ENCODE measurements at regions of chr1 and their contacts with region 1.

Region 1: DNA sequence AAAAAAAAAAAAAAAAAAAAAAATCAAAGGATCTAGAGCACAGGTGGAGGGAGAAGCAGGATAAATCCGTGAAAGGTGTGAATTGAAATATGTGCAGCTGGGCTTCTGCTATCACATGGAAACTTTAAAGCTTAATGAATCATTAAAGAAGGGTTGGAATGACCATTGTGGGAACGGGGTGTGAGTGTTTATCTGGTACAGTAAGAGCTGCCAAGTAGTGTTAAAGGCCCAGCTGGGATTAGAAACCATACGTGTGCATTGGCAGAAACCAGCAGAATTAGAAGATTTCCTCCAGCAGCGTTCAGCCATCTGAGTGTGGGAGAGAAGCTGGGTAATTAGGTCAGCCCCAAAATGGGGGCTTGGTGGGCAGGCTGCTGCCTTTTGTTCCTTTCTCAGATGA is 13.5 kb downstream of the FALEC start:
- DNase-seq: no peak
- CTCF ChIP-seq: no peak

Region 2: GRCh38 chr1:150464422-150464826 is 64.6 kb before region 1 on chr1:
- CTCF ChIA-PET with region 1: interaction called, 10 read pairs
- POLR2A ChIA-PET with region 1: no interaction called
- DNase-seq: peak; percentile 83
- CTCF ChIP-seq: peak; percentile 81

Region 3: DNA sequence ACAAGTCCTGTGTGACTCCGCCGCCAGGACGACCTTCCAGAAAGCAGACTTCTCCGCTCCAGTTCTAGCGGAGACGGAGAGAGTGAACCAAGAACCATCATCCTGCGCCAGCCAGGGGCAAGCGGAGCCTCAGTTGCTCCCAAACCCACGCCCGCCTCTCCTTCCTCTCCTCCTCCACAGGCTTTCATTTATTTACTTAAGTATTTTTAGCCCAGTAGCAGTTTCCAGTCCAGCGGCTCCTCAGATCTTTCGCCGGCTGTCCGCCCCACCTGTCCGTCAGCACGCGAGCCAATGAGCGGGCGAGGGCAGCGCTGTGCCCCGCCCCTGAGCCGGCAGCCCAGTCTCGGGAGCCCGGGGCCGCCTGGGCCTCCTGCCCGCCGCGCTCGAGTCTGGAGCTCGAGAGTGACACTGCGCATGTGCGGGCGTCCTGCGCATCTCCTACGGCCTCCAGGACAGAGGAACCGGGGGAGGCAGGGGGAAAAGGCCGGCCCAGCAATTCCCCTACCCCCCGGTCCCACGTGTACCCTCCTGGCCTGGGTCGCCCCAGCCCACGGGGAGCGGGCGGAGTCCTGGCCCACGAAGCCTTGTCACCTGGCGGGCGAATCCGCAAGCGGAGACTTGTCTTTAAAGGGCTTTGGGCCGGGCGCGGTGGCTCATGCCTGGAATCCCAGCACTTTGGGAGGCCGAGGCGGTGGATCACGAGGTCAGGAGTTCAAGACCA is 13.5 kb before region 1 on chr1 and contains the start of gene FALEC:
- CTCF ChIA-PET with region 1: interaction called, 46 read pairs
- POLR2A ChIA-PET with region 1: no interaction called
- DNase-seq: peak; percentile 99
- CTCF ChIP-seq: no peak

Region 4: GRCh38 chr1:150543500-150544141 is 14.6 kb after region 1 on chr1:
- CTCF ChIA-PET with region 1: interaction called, 47 read pairs
- POLR2A ChIA-PET with region 1: no interaction called
- DNase-seq: no peak
- CTCF ChIP-seq: no peak

Region 5: DNA sequence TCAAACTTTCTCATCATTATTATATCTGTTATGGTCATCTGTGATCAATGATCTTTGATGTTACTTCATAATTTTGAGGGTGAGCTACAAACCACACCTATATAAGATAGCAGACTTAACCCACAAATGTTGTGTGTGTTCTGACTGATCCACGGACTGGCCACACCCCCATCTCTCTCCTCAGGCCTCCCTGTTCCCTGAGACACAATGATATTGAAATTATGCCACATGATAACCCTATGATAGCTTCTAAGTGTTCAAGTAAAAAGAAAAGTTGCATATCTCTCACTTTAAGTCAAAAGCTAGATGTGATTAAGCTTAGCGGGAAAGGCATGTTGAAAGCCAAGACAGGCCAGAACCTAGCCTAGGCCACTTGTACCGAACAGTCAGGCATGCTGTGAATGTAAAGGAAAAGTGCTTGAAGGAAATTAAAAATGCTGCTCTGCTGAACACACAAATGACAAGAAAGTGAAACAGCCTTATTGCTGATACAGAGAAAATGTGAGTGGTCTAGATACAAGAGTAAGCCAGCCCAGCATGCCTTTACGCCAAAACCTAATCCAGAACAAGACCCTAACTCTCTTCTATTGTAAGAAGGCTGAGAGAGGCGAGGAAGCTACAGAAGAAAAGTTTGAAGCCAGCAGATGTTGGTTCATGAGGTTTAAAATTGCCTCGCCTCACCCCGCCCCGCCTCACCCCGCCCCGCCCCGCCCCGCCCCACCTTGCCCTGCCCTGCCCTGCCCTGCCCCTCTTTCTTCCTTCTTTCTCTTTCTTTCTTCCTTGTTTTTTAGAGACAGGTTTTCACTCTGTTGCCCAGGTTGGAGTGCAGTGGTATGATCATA is 220.1 kb after region 1 on chr1:
- CTCF ChIA-PET with region 1: no interaction called
- POLR2A ChIA-PET with region 1: no interaction called
- DNase-seq: no peak
- CTCF ChIP-seq: no peak